PC-9 (cell line): ENCODE measurements at regions of chr7 and their contacts with region 1.

Region 1: GRCh38 chr7:69091521-69091920 is 506.8 kb upstream of the AUTS2 start:
- DNase-seq: no peak
- H3K4me3 ChIP-seq: no peak overlapping the region
- H3K27ac ChIP-seq: no peak overlapping the region
- H3K4me1 ChIP-seq: no peaks in the 10 kb centered on the region
- H3K27me3 ChIP-seq: no peaks in the 10 kb centered on the region
- CTCF ChIP-seq: no peak

Region 2: DNA sequence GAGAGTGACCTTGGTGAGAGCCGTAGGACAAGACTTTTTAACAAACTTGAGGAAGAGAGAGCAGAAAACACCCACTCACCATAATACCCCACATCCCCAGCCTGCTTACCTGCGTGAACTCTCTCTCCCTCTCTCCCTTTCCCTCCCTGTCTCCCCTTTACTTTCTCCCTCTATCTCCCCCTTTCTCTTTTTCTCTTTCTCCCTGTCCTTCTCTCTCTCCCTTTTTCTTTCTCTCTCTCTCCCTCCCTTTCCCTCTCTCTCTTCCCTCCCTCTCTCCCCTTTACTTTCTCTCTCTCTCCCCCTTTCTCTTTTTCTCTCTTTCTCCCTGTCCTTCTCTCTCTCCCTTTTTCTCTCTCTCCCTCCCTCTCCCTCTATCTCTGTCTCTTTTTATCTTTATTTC is 42.8 kb after region 1 on chr7:
- CTCF ChIA-PET with region 1: no interaction called
- POLR2A ChIA-PET with region 1: interaction called, 16 read pairs
- intact Hi-C with region 1: no loop called
- DNase-seq: no peak
- H3K4me3 ChIP-seq: no peak overlapping the region
- H3K27ac ChIP-seq: no peak overlapping the region
- H3K4me1 ChIP-seq: no peaks in the 10 kb centered on the region
- H3K27me3 ChIP-seq: no peaks in the 10 kb centered on the region
- CTCF ChIP-seq: no peak